Activated CD8-positive, alpha-beta T cell treated with anti-CD3 and anti-CD28 coated beads for 36 hours (primary cell): ENCODE measurements at regions of chr20 and their contacts with region 1.

Region 1: DNA sequence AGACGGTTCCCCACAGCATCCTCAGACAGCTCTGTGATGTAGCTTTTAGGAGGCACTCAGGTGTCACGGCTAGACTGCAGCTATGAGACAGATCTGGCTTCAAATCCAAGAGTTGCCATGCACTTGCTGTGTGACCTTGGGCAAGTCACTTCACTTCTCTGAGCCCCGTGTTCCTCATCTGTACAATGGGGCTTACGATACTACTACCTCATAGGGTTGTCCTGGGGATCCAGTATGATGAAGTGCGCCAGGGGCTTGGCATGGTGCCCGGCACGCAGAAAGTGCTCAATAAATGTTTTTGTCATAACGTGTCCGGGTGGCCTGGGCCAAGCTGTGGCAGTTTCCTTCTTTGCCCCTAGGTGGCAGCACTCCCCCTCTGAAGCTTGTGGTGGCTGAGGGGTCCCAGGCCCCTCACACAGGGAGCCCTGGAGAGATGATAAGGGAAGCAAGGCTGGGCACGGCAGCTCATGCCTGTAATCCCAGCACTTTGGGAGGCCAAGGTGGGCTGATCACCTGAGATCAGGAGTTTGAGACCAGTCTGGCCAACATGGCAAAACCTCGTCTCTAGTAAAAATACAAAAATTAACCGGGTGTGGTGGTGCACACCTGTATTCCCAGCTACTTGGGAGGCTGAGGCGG is 19.1 kb upstream of the CHMP4B start:
- DNase-seq: peak; percentile 60
- ATAC-seq: peak; percentile 86
- H3K4me3 Mint-ChIP-seq: no peak overlapping the region
- H3K27ac Mint-ChIP-seq: no peak overlapping the region
- H3K4me1 Mint-ChIP-seq: peaks cover 6% of the 10 kb centered on the region
- H3K27me3 Mint-ChIP-seq: no peaks in the 10 kb centered on the region
- CTCF ChIP-seq: peak; percentile 88

Region 2: DNA sequence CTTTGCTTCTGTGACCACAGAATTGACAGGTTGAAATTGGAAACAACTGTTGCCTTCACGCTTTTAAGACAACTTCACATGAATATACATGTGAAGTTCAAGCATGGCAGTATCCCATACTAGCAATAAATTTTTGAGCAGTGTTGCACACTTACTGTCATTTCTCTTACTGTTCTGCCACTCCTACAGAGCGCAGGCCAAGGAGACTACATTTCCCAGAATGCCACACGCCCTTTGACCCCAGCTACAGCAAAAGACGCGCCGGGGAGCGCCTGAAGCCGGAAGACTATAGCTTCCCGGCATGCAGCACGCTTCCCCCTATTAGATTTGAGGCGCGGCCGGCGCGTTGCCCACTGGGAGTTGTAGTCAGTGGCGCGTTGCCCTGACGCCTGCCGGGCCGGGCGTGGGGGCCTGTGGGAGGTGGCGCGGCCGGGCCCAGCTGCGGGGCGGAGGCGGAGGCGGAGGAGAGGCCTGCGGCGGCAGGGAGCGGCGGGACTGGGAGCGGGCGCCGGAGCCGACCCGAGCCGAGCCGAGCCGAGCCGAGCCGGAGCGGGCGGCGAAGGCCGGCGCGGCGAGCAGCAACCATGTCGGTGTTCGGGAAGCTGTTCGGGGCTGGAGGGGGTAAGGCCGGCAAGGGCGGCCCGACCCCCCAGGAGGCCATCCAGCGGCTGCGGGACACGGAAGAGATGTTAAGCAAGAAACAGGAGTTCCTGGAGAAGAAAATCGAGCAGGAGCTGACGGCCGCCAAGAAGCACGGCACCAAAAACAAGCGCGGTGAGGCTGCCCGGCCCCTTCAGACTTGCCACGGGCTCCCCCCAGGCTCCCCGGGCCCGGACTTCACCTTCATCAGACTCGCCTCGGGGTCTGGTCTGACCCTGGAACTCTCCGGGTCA is 19.1 kb after region 1 on chr20 and contains the start of gene CHMP4B:
- CTCF ChIA-PET with region 1: interaction called, 20 read pairs
- POLR2A ChIA-PET with region 1: interaction called, 3 read pairs
- intact Hi-C with region 1: no loop called
- DNase-seq: peak; percentile 99
- ATAC-seq: peak; percentile 95
- H3K4me3 Mint-ChIP-seq: peak within 1 kb of the TSS; percentile 95
- H3K27ac Mint-ChIP-seq: peak within 1 kb of the TSS; percentile 99
- H3K4me1 Mint-ChIP-seq: peaks cover 37% of the 10 kb centered on the region
- H3K27me3 Mint-ChIP-seq: no peaks in the 10 kb centered on the region
- CTCF ChIP-seq: no peak
- total RNA-seq, gene CHMP4B: 82.0 to 82.9 TPM

Region 3: DNA sequence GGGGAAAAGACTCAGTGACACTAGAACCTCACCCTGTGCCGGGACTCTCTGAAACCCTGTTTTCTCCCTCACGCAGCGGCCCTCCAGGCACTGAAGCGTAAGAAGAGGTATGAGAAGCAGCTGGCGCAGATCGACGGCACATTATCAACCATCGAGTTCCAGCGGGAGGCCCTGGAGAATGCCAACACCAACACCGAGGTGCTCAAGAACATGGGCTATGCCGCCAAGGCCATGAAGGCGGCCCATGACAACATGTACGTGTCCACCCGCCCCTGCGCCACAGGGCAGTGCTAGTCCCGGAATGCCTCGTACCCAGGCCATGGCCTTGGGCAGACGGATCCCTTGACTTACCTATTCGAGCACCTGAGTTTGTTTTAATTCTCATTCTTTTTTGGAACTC is 56.3 kb after region 1 on chr20:
- CTCF ChIA-PET with region 1: interaction called, 10 read pairs
- POLR2A ChIA-PET with region 1: no interaction called
- intact Hi-C with region 1: no loop called
- DNase-seq: no peak
- ATAC-seq: no peak
- H3K4me3 Mint-ChIP-seq: no peak overlapping the region
- H3K27ac Mint-ChIP-seq: no peak overlapping the region
- H3K4me1 Mint-ChIP-seq: peaks cover 70% of the 10 kb centered on the region
- H3K27me3 Mint-ChIP-seq: no peaks in the 10 kb centered on the region
- CTCF ChIP-seq: no peak

Region 4: DNA sequence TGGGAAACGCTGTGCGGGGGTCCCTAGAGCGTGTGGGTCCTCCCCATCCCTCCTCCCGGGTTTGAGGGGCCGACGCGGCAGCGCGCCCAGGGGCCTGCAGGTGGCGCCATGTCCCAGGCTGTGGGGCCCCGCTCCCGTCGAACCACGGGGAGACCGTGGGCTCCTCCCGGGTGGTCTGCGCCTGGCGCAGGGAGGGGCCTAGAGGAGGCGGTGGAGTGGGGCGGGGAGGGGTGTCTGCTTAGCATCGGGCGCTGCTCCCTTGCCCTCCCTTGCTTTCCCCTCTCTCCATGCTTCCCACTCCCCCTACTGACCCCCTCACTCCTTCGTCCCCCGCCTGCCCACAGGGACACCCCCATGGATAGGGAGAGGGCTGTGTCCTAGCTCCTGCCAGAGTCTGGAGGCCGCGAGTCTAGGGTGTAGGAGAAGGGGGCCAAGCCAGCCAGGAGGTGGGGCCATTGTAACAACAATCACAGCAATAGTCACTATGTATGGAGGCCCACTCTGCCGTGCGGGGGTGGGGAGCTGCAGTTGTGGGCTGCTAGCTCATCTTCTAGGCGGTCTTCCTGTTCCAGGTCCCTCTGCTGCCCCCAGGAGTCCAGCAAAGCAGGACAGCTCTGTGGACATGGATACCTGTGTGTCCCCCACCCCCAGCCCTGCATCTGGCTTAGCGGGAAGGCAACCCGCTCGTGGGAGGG is 70.8 kb after region 1 on chr20:
- CTCF ChIA-PET with region 1: interaction called, 13 read pairs
- POLR2A ChIA-PET with region 1: no interaction called
- intact Hi-C with region 1: no loop called
- DNase-seq: peak; percentile 73
- ATAC-seq: peak; percentile 71
- H3K4me3 Mint-ChIP-seq: no peak overlapping the region
- H3K27ac Mint-ChIP-seq: no peak overlapping the region
- H3K4me1 Mint-ChIP-seq: peaks cover 19% of the 10 kb centered on the region
- H3K27me3 Mint-ChIP-seq: no peaks in the 10 kb centered on the region
- CTCF ChIP-seq: peak; percentile 91